GM10248 (cell line): ENCODE measurements at regions of chr3 and their contacts with region 1.

Region 1: DNA sequence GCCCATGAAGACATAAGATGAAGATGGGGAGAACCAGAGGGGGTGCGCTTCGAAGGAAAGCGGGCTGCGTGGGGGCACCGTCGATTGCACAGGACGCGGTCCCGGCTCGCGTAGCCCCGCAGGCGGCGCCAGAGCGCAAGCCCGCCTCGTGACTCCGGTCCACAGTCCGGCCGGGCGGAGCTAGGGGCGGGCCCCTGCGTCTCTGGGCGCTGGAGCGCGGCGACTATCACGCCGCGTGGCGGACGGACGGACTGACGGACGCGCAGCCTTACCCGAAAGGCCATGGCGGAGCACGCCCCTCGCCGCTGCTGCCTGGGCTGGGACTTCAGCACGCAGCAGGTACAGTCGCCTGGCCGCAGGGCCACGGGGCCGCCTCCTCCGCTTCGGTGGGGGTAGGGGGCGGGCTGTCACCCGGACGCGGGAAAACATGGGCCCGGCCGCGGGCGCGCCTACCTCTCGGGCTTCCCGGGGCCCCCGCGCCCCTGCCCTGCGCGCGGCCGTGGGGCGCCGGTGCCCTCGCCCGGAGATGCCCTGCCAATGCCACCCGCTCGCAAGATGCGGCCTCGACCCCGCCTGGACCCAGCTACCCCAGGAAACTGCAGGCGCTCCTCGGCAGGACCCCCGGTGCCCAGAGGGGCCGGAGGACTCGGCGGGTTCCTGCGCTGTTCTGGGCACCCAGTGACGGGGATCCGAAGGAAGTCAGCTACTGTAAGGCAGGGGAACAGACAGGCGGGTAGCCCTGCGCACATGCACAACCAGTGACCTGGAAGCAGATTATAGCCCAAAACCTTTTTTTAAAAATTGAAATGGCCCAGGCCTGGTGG is at the start of gene XYLB:
- DNase-seq: peak; percentile 93
- CTCF ChIP-seq: peak; percentile 85

Region 2: GRCh38 chr3:38117748-38118420 is 228.9 kb before region 1 on chr3:
- CTCF ChIA-PET with region 1: interaction called, 13 read pairs
- POLR2A ChIA-PET with region 1: no interaction called
- DNase-seq: peak; percentile 79
- CTCF ChIP-seq: peak; percentile 86

Region 3: DNA sequence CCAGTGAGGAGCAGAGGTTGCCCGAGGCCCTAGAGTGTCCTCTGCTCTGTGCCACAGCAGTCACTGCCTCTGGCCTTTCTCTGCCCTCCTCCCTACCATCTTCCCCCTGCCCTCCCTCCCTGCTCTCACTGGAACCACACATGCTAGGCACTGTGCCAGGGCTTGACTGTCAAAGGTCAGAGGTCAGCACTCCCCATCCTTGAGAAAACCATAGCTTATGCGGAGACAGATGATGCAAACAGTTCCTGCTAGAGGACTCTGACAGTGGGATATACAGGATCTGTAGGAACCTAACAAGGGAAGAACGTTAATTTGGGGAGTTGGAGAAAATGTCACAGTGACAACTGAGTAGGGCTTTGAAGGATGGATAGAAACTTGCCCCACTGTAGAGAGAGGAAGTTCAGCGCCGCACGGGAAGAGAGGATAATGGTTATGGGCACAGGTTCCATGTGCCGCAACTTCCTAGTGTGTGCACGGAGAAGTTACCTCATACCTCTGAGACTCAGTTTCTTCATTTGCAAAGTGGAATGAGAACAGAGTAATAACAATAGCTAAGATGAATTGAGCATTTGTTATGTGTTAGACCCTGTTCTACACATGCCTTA is 29.5 kb before region 1 on chr3:
- CTCF ChIA-PET with region 1: interaction called, 10 read pairs
- POLR2A ChIA-PET with region 1: no interaction called
- DNase-seq: no peak
- CTCF ChIP-seq: no peak

Region 4: GRCh38 chr3:38327335-38328009 is 19.3 kb before region 1 on chr3:
- CTCF ChIA-PET with region 1: interaction called, 36 read pairs
- POLR2A ChIA-PET with region 1: no interaction called
- DNase-seq: no peak
- CTCF ChIP-seq: no peak

Region 5: GRCh38 chr3:38334142-38335055 is 12.4 kb before region 1 on chr3:
- CTCF ChIA-PET with region 1: interaction called, 36 read pairs
- POLR2A ChIA-PET with region 1: no interaction called
- DNase-seq: no peak
- CTCF ChIP-seq: no peak

Region 6: DNA sequence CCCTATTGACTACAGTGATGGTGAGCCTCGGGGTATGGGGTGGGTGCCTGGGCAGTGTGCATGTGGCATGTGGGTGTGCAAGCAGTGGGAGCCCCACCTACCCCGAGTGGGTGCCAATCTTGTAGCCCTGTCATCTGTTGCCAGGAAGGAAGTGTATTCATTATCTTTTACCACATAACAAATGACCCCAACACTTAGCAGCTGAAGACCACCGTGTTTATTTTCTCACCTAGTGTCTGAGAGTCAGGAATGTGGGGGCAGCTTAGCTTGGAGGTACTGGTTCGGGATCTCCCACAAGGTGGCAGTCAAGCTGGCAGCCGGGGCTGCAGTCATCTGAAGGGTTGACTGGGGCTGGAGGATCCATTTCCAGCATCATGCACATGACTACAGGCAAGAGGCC is 21.4 kb after region 1 on chr3:
- CTCF ChIA-PET with region 1: interaction called, 17 read pairs
- POLR2A ChIA-PET with region 1: no interaction called
- DNase-seq: no peak
- CTCF ChIP-seq: no peak

Region 7: GRCh38 chr3:38479431-38480092 is 132.8 kb after region 1 on chr3:
- CTCF ChIA-PET with region 1: interaction called, 43 read pairs
- POLR2A ChIA-PET with region 1: no interaction called
- DNase-seq: peak; percentile 79
- CTCF ChIP-seq: peak; percentile 91